ENCODE measurements at regions of chr16 and their contacts with region 1.

Region 1: DNA sequence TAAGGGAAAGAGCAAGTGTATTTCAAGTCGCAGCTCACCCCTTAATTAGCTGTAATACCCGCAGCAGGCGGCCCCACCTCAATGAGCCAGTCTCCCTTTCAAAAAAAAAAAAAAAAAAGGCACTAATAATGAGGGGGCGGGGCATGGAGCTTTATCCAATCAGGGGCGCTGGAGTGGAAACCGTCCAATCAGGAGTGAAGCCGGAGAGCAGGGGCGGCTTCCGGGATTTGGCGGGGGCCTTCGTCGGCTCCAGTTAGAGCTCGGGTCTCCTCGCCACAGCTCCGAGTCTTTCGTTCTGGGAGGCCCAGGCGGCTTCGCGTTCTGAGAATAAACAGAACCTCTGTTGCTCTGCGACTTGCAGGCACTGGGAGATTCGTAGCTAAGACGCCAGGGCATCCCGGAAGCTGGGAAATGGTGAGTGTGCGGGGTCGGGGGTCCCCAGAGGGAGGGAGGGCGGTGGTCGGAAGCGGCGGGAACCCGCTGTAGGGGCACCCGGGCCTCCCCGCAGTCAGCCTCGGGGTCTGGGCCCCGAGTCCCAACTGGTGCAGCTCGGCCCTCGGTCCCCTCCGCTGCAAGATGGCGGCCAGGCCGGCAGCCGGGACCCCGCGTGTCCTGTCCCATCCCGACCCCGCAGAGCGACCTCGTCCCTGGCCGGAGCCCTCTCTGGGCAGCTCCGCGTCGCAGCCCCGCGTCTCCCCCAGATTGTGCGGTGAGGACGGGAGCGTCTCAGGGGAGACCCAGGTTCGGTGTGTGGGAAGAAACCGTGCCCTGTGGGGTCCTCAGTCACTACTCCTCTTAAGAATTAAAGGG is at the start of gene ZNF267:
- DNase-seq: peak; percentile 97
- total RNA-seq, gene ZNF267: 4.2 TPM

Region 2: DNA sequence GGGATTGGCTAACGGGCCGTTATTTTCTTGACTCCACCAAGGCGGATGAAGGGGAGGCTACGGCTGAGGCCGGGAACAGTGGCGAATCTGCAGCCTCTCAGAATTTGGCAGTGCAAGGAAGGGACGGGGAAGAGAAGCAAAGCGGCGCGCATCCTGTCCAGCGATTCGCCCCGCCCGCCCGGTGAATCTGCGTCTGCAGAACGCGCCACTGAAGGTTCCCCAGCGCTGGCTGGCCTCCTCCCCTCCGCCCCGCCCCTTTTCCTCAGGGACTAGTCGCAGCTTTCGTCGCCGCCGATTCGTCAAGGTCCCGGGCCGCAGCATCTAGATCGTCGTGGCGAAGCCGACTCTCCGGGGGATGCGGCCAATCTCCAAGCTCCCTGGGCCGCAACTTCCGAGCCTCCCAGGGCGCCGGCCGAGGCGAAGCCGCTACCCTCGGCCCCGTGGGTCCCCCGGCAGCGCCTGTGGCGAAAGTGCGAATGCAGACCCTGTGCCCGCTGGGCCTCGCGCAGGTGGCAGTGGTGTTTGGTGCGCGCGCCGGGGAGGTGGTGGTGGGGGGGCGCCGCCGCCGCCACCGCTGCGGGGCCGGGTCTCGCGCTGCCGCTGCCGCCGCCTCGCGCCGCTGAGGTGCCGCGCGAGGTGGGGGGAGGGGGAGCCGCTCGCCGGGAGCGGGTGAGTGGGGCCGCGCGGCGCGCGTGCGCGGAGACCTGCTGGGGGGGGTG is 916.1 kb before region 1 on chr16 and contains the start of gene SETD1A:
- intact Hi-C with region 1: loop called (anchors 10 kb)
- DNase-seq: peak; percentile 98
- total RNA-seq, gene SETD1A: 9.6 TPM

Region 3: GRCh38 chr16:31713071-31713944 is 160.5 kb before region 1 on chr16:
- intact Hi-C with region 1: loop called (anchors 5 kb)
- DNase-seq: peak; percentile 94